ENCODE measurements at regions of chr17 and their contacts with region 1.

Region 1: DNA sequence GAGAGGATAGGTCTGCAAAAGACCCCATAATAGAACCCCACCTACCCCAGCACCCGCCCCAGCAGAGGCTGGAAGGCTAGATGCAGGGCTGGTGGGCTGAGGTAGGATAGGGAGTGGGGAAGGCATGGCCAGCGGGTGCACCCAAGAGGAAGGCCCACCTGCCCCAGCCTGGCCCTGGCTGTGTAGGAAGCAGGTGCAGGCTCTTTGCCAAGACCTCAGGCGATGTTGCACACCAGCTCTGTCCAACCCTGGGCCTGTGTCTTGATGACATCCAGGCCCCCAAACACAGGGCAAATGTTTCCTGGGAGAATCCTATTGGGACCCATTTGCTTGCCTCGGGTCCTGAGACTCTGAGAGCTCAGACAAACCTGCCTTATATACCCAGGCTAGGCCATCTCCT is 12.2 kb downstream of the UNC119 start:
- DNase-seq: no peak
- ATAC-seq: peak in 1 of 2 experiments; percentile 9; a peak in 2 of 6 replicates
- H3K4me3 ChIP-seq: no peak overlapping the region
- H3K27ac ChIP-seq: no peak overlapping the region
- H3K4me1 ChIP-seq: 0 out of 3 replicates have a peak, but pooled peaks cover 5% of the 10 kb centered on the region
- CTCF ChIP-seq: no peak
- EP300 ChIP-seq: no peak
- POLR2A ChIP-seq: no peak
- RAD21 ChIP-seq: no peak

Region 2: GRCh38 chr17:28484296-28484695 is 55.9 kb before region 1 on chr17:
- CTCF ChIA-PET with region 1: interaction called, 17 read pairs
- POLR2A ChIA-PET with region 1: no interaction called
- DNase-seq: no peak
- ATAC-seq: no peak
- H3K4me3 ChIP-seq: no peak overlapping the region
- H3K27ac ChIP-seq: no peak overlapping the region
- H3K4me1 ChIP-seq: peaks cover 11% of the 10 kb centered on the region
- CTCF ChIP-seq: no peak
- EP300 ChIP-seq: no peak
- POLR2A ChIP-seq: no peak
- RAD21 ChIP-seq: no peak

Region 3: DNA sequence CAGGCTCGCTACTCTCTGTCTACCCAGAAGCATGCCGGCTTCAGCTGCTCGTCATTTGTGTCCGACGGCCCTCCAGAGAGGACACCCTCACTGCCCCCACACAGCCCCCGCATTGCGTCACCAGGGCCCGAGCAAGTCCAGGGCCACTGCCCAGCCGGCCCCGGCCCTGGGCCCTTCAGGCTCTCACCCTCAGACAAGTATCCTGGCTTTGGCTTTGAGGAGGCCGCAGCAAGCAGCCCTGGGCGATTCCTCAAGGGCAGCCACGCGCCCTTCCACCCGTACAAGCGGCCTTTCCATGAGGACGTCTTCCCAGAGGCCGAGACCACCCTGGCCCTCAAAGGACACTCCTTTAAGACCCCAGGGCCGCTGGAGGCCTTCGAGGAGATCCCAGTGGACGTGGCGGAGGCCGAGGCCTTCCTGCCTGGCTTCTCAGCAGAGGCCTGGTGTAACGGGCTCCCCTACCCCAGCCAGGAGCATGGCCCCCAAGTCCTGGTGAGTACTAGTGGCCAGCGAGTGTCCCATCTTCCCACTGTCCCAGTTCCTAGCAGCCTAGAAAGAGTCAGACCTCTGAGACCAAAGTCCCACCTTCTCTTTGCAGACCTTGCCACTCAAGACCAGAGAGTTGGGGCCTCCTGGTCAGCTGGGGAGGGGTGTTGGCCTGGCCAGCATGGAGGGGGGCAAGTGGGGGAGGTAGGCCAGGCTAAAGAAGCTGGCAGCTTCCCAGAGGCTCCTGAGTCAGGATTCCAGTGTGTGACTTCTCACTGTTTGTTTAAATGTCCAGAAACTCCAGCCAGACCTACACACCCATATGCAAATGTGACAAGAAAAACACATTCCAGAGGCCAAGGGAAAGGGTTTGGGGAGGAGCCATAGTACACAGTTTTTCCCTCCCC is 15.5 kb before region 1 on chr17:
- CTCF ChIA-PET with region 1: interaction called, 143 read pairs
- POLR2A ChIA-PET with region 1: no interaction called
- DNase-seq: peak; percentile 56 to 70
- ATAC-seq: peak; percentile 37 to 75; a peak in 3 of 6 replicates
- H3K4me3 ChIP-seq: no peak overlapping the region
- H3K27ac ChIP-seq: peak overlapping the region; percentile 43 to 65
- H3K4me1 ChIP-seq: peaks cover 31% of the 10 kb centered on the region
- CTCF ChIP-seq: no peak
- EP300 ChIP-seq: no peak
- POLR2A ChIP-seq: no peak
- RAD21 ChIP-seq: no peak

Region 4: GRCh38 chr17:28743225-28744103 is 203.2 kb after region 1 on chr17 and contains the start of gene TRAF4:
- CTCF ChIA-PET with region 1: no interaction called
- POLR2A ChIA-PET with region 1: no interaction called
- DNase-seq: peak; percentile 93 to 96
- ATAC-seq: peak; percentile 66 to 75
- H3K4me3 ChIP-seq: peak within 1 kb of the TSS; percentile 93
- H3K27ac ChIP-seq: peak within 1 kb of the TSS; percentile 98 to 99
- H3K4me1 ChIP-seq: peaks cover 44% of the 10 kb centered on the region
- CTCF ChIP-seq: peak; percentile 41; the same call in 2 of the 3 replicates
- EP300 ChIP-seq: peak in 1 of 2 experiments; percentile 32; a peak in 1 of 5 replicates
- POLR2A ChIP-seq: peak; percentile 97
- RAD21 ChIP-seq: 0 out of 5 replicates have a peak, but pooled peaks of 1 of the 2 experiments have one; percentile 1
- polyA plus RNA-seq, gene TRAF4: 64.0 and 70.2 TPM in 2 replicates